ENCODE measurements at regions of chr19 and their contacts with region 1.

Region 1: DNA sequence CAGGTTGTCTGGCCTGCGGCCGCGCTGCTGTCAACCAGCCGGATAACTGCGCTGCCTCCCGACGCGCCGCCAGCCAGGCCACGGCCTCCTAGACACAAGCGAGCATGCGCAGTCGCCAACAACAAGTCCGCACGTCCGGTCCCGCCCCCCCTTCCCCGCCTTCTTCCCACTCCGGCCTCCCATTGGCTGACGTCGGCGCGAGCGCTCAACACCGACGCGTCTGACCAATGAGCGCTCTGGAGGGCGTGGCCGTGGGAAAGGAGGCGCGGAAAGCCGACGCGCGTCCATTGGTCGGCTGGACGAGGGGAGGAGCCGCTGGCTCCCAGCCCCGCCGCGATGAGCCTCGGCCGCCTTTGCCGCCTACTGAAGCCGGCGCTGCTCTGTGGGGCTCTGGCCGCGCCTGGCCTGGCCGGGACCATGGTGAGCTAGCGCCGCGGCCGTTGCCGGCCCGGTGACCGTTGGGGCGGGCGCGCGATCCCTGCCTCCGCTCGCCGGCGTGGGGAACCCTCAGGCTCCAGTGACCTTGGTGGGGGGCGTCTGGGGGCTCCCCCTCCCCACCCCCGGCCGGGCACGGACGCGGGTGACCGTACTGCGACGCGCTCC is at the start of gene GPX4:
- DNase-seq: peak; percentile 99
- ATAC-seq: peak; percentile 70
- H3K4me3 ChIP-seq: peak within 1 kb of the TSS; percentile 85
- H3K27ac ChIP-seq: peak within 1 kb of the TSS; percentile 97
- H3K4me1 ChIP-seq: peaks cover 12% of the 10 kb centered on the region
- H3K27me3 ChIP-seq: no peaks in the 10 kb centered on the region
- CTCF ChIP-seq: no peak
- POLR2A ChIP-seq: peak; percentile 98
- RAD21 ChIP-seq: 0 out of 2 replicates have a peak, but pooled peaks have one; percentile 7
- total RNA-seq, gene GPX4: 357 and 415 TPM in 2 replicates

Region 2: DNA sequence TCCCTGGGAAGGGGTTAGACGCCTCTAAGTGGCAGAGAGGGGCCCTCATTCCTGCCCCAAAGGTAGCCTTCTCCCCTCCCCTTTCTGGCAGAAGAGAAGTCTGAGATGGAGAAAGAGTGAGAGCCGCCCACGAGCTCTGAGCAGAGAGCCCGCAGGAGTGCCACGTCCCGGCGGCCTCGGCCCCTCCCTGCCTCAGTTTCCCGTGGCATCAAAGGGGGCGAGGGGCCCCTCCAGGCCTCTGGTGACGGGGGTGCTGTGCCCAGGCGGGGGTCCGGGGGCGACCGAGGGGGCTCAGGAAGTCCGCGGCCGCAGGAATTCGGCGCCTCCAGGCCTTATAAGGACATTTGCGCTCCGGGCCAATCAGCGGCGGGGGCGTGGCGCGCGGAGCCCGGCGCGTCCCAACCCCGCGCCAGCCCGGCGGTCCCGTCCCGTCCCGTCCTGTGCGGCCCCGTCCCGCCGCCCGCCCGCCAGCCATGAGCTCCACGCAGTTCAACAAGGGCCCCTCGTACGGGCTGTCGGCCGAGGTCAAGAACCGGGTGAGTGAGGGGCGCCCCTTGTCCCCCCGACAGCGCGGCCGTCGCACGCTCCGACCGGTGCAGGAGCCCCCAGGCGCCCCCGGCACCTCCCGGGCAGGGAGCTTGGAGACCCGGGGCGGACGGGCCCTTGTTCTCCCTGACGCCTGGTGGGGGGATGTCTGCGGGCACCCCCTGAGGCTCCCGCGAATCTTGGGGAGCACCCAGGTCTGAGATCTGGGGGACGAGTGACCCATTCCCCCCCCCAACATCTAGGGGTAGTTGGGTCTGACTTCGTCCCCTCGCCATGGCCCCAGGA is 77.4 kb before region 1 on chr19 and contains the start of gene CNN2:
- CTCF ChIA-PET with region 1: interaction called, 4 read pairs
- POLR2A ChIA-PET with region 1: no interaction called
- dilution Hi-C with region 1: no loop called
- in situ Hi-C with region 1: no loop called
- intact Hi-C with region 1: loop called (anchors 5 kb)
- DNase-seq: peak; percentile 67
- ATAC-seq: peak; percentile 80
- H3K4me3 ChIP-seq: peak within 1 kb of the TSS; percentile 93
- H3K27ac ChIP-seq: peak within 1 kb of the TSS; percentile 100
- H3K4me1 ChIP-seq: peaks cover 16% of the 10 kb centered on the region
- H3K27me3 ChIP-seq: no peaks in the 10 kb centered on the region
- CTCF ChIP-seq: no peak
- POLR2A ChIP-seq: peak; percentile 76
- RAD21 ChIP-seq: no peak
- total RNA-seq, gene CNN2: 270 and 272 TPM in 2 replicates

Region 3: GRCh38 chr19:1039646-1040475 is 63.9 kb before region 1 on chr19 and contains the start of gene ABCA7:
- CTCF ChIA-PET with region 1: no interaction called
- POLR2A ChIA-PET with region 1: no interaction called
- dilution Hi-C with region 1: no loop called
- in situ Hi-C with region 1: no loop called
- intact Hi-C with region 1: loop called (anchors 2 kb)
- DNase-seq: peak; percentile 96
- ATAC-seq: peak; percentile 85
- H3K4me3 ChIP-seq: peak within 1 kb of the TSS; percentile 44
- H3K27ac ChIP-seq: no peak within 1 kb of the TSS
- H3K4me1 ChIP-seq: peaks cover 7% of the 10 kb centered on the region; the same call in 1 of the 2 replicates
- H3K27me3 ChIP-seq: no peaks in the 10 kb centered on the region
- CTCF ChIP-seq: no peak
- POLR2A ChIP-seq: peak; percentile 73
- RAD21 ChIP-seq: no peak; the same call in 1 of the 2 replicates
- total RNA-seq, gene ABCA7: 0.36 and 0.56 TPM in 2 replicates

Region 4: DNA sequence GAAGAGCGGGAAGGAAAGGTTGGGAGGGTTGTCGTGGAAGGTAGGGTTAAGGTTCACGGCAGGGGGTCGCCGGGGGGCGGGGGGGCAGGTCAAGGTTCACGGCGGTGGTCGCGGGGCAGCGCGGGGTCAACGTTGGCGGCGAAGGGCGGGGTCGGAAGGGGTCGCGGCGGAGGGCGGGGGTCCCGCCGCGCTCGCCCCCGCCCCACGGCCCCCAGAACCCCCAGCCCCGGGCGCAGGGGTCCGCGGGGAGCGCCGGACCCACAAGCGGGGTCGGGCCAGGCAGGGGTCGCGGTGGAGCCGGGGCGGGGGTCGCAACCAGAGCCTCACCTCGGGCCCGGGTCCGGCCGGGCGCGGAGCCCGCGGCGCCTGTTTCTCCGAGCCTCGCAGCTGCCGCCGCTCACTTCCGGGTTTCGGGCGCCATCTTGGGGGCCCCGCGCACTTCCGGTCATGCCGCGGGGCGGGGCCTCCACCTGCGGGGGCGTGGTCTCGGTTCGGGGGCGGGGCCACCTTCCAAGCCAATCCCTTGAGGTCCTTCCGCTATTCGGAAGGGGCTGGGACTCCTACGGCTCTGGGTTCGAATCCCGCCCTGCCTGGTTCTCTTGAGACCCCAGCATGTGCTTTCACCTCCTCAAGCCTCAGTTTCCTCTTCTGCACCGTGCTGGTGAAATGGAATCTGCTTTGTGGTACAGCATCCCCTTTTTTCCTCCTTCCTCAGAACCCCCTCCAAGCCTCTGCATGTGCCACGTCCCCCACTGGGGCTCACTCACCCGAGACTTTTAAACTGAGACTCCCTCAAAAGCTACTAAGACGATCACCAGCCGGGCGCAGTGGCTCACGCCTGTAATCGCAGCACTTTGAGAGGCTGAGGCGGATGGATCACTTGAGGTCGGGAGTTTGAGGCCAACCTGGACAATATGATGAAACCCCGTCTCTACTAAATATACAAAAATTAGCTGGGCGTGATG is 70.3 kb after region 1 on chr19 and contains the start of gene SBNO2:
- CTCF ChIA-PET with region 1: no interaction called
- POLR2A ChIA-PET with region 1: no interaction called
- dilution Hi-C with region 1: no loop called
- in situ Hi-C with region 1: no loop called
- intact Hi-C with region 1: loop called (anchors 2 kb)
- DNase-seq: peak; percentile 80
- ATAC-seq: peak; percentile 56
- H3K4me3 ChIP-seq: peak within 1 kb of the TSS; percentile 92
- H3K27ac ChIP-seq: peak within 1 kb of the TSS; percentile 99
- H3K4me1 ChIP-seq: peaks cover 37% of the 10 kb centered on the region
- H3K27me3 ChIP-seq: no peaks in the 10 kb centered on the region
- CTCF ChIP-seq: no peak
- POLR2A ChIP-seq: peak; percentile 90
- RAD21 ChIP-seq: no peak
- total RNA-seq, gene SBNO2: 13.4 and 13.6 TPM in 2 replicates

Region 5: GRCh38 chr19:1205114-1206062 is 101.6 kb after region 1 on chr19 and contains the start of gene STK11:
- CTCF ChIA-PET with region 1: interaction called, 3 read pairs
- POLR2A ChIA-PET with region 1: interaction called, 3 read pairs
- dilution Hi-C with region 1: no loop called
- in situ Hi-C with region 1: loop called (anchors 5 kb)
- intact Hi-C with region 1: no loop called
- DNase-seq: peak; percentile 94
- ATAC-seq: peak; percentile 92
- H3K4me3 ChIP-seq: peak within 1 kb of the TSS; percentile 71
- H3K27ac ChIP-seq: peak within 1 kb of the TSS; percentile 58
- H3K4me1 ChIP-seq: peaks cover 18% of the 10 kb centered on the region
- H3K27me3 ChIP-seq: no peaks in the 10 kb centered on the region
- CTCF ChIP-seq: no peak
- POLR2A ChIP-seq: peak; percentile 74; the same call in 1 of the 2 replicates
- RAD21 ChIP-seq: no peak
- total RNA-seq, gene STK11: 39.3 and 45.0 TPM in 2 replicates

Measured in IMR-90 (cell line).